Breast epithelium (tissue), 4 donors: ENCODE measurements at regions of chr5 and their contacts with region 1.

Region 1: DNA sequence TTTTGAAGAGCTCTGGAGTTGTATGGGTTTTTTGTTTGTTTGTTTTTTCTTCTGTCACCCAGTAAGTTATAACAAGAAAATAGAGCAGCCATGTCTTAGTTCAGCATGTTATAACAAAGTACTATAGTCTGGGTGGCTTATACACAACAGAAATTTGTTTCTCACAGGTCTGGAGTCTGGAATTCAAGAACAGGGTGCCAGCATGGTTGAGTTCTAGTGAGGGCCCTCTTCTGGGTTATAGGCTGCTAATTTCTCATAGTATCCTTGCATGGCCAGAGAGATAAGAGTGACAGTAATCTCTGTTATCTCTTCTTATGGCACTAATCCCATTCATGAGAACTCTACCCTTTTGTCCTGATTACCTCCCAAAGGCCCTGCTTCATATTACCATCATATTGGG is 114.7 kb downstream of the GIN1 start:
- DNase-seq: no peak
- H3K4me3 ChIP-seq: no peak overlapping the region
- H3K27ac ChIP-seq: no peak overlapping the region
- H3K4me1 ChIP-seq: no peaks in the 10 kb centered on the region
- H3K27me3 ChIP-seq: no peaks in the 10 kb centered on the region
- CTCF ChIP-seq: no peak
- POLR2A ChIP-seq: no peak

Region 2: DNA sequence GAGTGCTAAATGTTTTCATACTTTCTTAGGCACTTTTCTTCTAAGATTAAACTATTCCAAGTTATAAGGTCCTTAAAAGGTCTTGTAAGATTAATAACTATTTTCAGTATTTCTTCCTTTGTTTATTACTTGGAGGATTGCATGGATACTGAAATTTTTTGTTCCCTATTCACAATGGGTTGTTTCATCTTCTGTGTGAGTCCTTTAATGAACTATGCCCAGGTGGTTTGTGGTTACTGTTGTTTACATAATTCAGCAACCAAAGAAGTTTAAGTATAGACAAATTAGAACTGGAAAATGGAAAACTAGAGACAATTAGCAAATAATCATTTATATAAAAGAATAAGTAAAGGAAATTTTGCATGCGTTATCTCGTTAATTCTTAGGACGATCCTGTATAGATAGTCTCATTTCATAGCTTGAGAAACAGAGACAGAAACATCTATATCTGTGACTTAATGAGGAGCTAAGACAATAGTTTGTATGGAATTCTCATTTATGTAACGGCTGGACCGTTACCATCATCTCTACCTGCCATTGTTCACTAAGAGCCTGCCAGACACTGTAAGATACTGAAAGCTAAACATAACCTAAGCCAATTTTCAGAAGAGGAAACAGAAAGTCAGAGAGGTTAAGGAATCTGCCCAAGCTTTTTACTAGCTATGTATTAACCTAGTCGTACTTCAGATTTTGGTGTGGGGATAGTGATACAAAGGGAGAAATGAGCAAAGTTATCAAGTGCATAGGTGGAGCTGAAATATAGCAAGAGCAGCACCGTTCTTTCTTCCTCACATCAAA is 102.0 kb before region 1 on chr5:
- intact Hi-C with region 1: loop called (anchors 5 kb)
- DNase-seq: no peak
- H3K4me3 ChIP-seq: no peak overlapping the region
- H3K27ac ChIP-seq: peak overlapping the region in 1 of 2 donors; percentile 6
- H3K4me1 ChIP-seq: no peaks in the 10 kb centered on the region
- H3K27me3 ChIP-seq: no peaks in the 10 kb centered on the region
- CTCF ChIP-seq: no peak
- POLR2A ChIP-seq: no peak

Region 3: DNA sequence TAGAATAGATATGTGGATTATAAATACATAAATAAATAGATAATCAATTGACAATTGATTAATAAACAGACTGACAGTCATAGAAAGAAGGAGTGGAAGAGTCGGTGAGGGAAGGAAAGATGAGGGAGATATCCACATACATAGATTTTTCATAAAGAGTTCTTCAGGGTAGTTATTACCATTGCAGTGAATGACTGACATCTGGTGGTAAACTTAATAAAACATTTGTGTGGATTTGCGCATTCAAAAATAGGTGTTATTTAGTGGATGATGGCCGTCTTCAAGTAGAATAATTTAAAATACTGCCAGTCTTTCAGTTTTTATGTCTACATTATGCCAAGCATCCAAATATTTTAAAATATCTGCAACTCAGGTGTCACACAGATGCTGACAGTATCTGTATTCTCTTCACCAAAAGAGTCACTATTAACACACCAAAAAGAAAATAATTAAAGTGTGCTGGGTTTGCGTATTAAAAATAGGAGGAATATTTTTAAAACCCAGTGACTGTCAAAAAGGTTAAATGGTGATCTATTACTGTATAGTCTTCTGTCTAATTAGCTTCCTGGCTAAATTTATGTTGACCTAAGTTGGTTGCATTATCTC is 35.9 kb after region 1 on chr5:
- intact Hi-C with region 1: no loop called
- DNase-seq: no peak
- H3K4me3 ChIP-seq: no peak overlapping the region
- H3K27ac ChIP-seq: no peak overlapping the region
- H3K4me1 ChIP-seq: no peaks in the 10 kb centered on the region
- H3K27me3 ChIP-seq: no peaks in the 10 kb centered on the region
- CTCF ChIP-seq: peak; percentile 26 to 57 (median 37)
- POLR2A ChIP-seq: no peak

Region 4: GRCh38 chr5:103546858-103547257 is 541.6 kb after region 1 on chr5:
- intact Hi-C with region 1: no loop called
- DNase-seq: no peak
- H3K4me3 ChIP-seq: no peak overlapping the region
- H3K27ac ChIP-seq: no peak overlapping the region
- H3K4me1 ChIP-seq: no peaks in the 10 kb centered on the region
- H3K27me3 ChIP-seq: no peaks in the 10 kb centered on the region
- CTCF ChIP-seq: no peak
- POLR2A ChIP-seq: no peak